ENCODE measurements at regions of chr7 and their contacts with region 1.

Region 1: GRCh38 chr7:25565949-25566348 is 337.7 kb upstream of the NPVF start:
- DNase-seq: peak; percentile 94
- H3K4me3 ChIP-seq: no peak overlapping the region
- H3K27ac ChIP-seq: peak overlapping the region in 1 of 4 donors; percentile 52
- H3K4me1 ChIP-seq: peaks cover 2 to 41% (median 36%) of the 10 kb centered on the region in 4 donors
- H3K27me3 ChIP-seq: no peaks in the 10 kb centered on the region
- CTCF ChIP-seq: peak; percentile 100
- EP300 ChIP-seq: no peak
- POLR2A ChIP-seq: no peak

Region 2: DNA sequence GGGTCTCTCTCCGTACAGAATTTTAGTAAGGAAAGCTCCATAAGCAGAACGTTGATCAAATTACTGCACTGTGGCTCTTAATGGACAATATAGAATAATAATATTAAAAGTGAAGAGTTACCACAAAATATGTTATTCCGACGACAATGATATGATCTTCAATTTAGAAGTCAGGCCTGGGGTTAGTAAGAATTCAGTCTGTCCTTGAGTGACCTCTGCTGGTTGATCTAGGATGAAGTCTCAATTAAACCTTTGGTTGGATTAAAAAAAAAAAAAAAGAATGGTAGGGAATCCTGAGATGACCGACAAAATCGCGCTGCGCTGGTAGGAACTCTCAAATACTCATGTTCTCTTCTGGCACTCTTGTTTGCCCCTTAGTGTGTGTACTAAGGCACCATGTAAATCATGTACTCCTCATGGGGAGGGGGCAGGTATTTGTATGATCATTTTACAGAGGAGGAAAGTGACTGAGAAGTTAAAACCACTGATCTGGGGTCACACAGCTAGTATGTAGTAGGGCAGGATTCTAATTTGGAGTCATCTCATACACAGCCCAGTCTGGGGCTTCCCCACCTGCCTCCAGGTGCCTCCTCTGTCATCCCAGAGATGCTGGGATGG is 176.4 kb before region 1 on chr7:
- intact Hi-C with region 1: loop called (anchors 2 kb)
- DNase-seq: peak; percentile 53
- H3K4me3 ChIP-seq: no peak overlapping the region
- H3K27ac ChIP-seq: peak overlapping the region in 1 of 4 donors; percentile 12
- H3K4me1 ChIP-seq: peaks cover 5 to 78% (median 68%) of the 10 kb centered on the region in 4 donors
- H3K27me3 ChIP-seq: no peaks in the 10 kb centered on the region
- CTCF ChIP-seq: peak; percentile 59 to 66 (median 62)
- EP300 ChIP-seq: no peak
- POLR2A ChIP-seq: no peak